CD4-positive, alpha-beta memory T cell (primary cell): ENCODE measurements at regions of chr1 and their contacts with region 1.

Region 1: DNA sequence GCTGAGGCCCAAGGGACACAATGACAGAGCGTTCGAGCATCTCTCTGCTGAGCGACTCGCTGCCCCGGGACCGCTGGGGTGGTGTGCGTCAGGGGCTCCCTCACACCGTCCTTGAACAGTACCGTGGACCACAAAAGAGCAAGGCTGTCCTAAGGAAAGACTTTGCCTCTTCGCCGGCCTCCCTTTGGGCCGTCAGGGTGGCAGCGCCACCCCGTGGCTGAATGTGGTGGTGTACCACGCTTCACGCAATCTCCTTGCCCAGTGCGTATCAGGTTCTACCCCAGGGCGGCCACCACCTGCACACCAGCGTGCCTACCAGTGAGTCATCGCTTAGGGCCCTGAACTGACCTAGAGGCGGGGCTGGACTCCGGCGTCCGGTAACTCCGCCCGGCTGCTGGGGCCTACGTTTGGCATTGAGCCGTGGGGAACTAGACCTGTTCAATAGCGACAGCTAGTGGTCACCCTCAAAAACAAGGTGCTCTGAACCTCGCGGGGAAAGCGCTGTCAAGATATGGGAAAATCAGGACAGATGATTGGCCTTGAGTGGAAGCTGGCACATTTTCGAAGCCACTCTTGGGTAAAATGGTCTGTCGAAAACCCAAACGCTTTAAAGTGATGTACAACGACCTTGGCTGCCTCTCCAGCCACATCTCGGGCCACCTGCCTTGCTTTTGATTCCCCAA is 8.1 kb upstream of the TRAF3IP3 start:
- DNase-seq: peak; percentile 80 to 88 (median 83)
- H3K4me3 ChIP-seq: peak overlapping the region; percentile 17 to 67
- H3K4me3 Mint-ChIP-seq: peak overlapping the region; percentile 89 to 96 (median 92)
- H3K27ac ChIP-seq: peak overlapping the region; percentile 64
- H3K27ac Mint-ChIP-seq: peak overlapping the region; percentile 75 to 99 (median 97)
- H3K4me1 ChIP-seq: peaks cover 58% of the 10 kb centered on the region
- H3K4me1 Mint-ChIP-seq: peaks cover 41 to 69% (median 54%) of the 10 kb centered on the region in 4 donors
- H3K27me3 ChIP-seq: no peaks in the 10 kb centered on the region
- H3K27me3 Mint-ChIP-seq: no peaks in the 10 kb centered on the region

Region 2: DNA sequence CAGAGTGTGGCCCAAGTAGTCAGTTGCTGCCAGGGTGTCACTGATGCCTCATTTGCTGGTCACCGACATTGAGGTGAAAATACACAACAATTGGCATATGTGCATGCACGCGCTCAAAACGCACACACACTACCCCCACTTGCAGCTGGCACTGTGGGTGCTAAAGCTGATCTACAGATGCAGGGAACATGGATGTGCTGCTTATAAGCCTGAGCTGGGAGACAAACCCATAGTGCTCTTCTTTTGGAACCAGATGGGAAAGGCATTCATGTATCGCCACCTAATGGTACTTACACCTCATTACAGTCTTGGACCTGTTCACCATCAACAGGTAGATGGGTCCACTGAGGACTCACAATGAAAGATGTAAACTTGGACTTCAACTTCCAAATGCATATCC is 234.5 kb before region 1 on chr1:
- CTCF ChIA-PET with region 1: no interaction called
- POLR2A ChIA-PET with region 1: no interaction called
- intact Hi-C with region 1: no loop called
- DNase-seq: no peak
- H3K4me3 ChIP-seq: no peak overlapping the region
- H3K4me3 Mint-ChIP-seq: no peak overlapping the region
- H3K27ac ChIP-seq: no peak overlapping the region
- H3K27ac Mint-ChIP-seq: no peak overlapping the region
- H3K4me1 ChIP-seq: no peaks in the 10 kb centered on the region
- H3K4me1 Mint-ChIP-seq: peaks cover 0 to 1% (median 0%) of the 10 kb centered on the region in 4 donors
- H3K27me3 ChIP-seq: no peaks in the 10 kb centered on the region
- H3K27me3 Mint-ChIP-seq: peaks cover 10 to 14% of the 10 kb centered on the region in 2 donors

Region 3: GRCh38 chr1:209576798-209577197 is 170.9 kb before region 1 on chr1:
- CTCF ChIA-PET with region 1: interaction called, 25 read pairs
- POLR2A ChIA-PET with region 1: no interaction called
- intact Hi-C with region 1: loop called (anchors 1 kb)
- DNase-seq: peak in 4 of 5 donors; percentile 47 to 60 (median 50)
- H3K4me3 ChIP-seq: no peak overlapping the region
- H3K4me3 Mint-ChIP-seq: no peak overlapping the region
- H3K27ac ChIP-seq: no peak overlapping the region
- H3K27ac Mint-ChIP-seq: peak overlapping the region in 3 of 7 donors; percentile 24 to 61 (median 53)
- H3K4me1 ChIP-seq: no peaks in the 10 kb centered on the region
- H3K4me1 Mint-ChIP-seq: peaks cover 0 to 2% (median under 1%) of the 10 kb centered on the region in 4 donors
- H3K27me3 ChIP-seq: peaks cover 5% of the 10 kb centered on the region
- H3K27me3 Mint-ChIP-seq: peaks cover 2 to 6% of the 10 kb centered on the region in 2 donors

Region 4: DNA sequence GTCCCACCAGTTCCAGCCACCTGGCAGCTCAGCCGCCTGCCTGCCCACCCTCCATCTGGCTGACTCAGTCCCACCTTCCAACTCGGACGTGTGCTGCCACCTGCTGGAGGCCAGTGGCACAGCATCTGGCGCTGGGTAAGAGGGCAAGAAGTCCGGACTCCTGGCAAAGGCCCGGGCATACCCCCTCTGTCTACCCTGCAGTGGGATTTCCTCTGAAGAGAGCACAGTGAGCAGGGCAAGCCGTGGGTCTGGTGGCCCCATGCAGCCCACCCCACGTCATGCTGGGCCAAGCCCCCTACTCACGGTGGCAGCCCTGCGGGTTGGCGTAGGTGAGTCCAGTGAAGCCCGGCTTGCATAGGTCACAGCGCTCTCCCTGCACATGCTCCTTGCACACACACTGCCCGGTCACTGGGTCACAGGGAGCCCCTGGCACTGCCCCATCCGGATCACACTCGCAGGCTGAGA is 120.0 kb before region 1 on chr1:
- CTCF ChIA-PET with region 1: interaction called, 6 read pairs
- POLR2A ChIA-PET with region 1: no interaction called
- intact Hi-C with region 1: loop called (anchors 1 kb)
- DNase-seq: peak; percentile 50 to 65 (median 61)
- H3K4me3 ChIP-seq: no peak overlapping the region
- H3K4me3 Mint-ChIP-seq: peak overlapping the region in 1 of 8 donors; percentile 23
- H3K27ac ChIP-seq: no peak overlapping the region
- H3K27ac Mint-ChIP-seq: no peak overlapping the region
- H3K4me1 ChIP-seq: peaks cover 4% of the 10 kb centered on the region
- H3K4me1 Mint-ChIP-seq: peaks cover 2 to 18% (median 6%) of the 10 kb centered on the region in 4 donors
- H3K27me3 ChIP-seq: no peaks in the 10 kb centered on the region
- H3K27me3 Mint-ChIP-seq: no peaks in the 10 kb centered on the region

Region 5: DNA sequence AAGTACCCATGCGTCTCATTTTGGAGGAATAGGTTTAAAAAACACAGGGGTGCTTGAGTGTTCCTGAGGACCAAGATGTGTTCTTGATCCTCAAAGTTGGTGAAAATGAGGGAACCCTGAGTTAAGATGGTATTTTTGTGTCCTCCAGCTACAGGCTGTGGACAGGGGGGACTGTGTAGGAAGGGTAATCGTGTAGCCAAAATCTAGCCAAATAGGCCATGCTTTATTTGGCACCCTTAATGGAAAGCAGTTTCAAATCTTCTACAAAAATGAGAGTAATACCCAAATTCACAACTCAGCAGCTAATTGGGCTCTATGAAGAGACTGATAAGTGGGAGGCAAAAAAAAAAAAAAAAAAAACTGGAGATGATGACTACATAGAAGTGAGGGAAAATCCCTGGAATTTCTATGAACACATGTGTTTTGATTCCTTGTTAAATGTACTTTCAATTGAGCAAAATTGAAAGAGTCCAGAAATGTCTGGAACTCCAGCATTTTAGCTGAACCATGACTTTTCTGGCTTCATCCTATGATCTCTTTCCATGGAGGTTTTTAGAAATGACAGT is 42.6 kb before region 1 on chr1:
- CTCF ChIA-PET with region 1: interaction called, 4 read pairs
- POLR2A ChIA-PET with region 1: no interaction called
- intact Hi-C with region 1: loop called (anchors 5 kb)
- DNase-seq: no peak
- H3K4me3 ChIP-seq: no peak overlapping the region
- H3K4me3 Mint-ChIP-seq: no peak overlapping the region
- H3K27ac ChIP-seq: no peak overlapping the region
- H3K27ac Mint-ChIP-seq: no peak overlapping the region
- H3K4me1 ChIP-seq: peaks cover 4% of the 10 kb centered on the region
- H3K4me1 Mint-ChIP-seq: peaks cover 10 to 16% (median 12%) of the 10 kb centered on the region in 4 donors
- H3K27me3 ChIP-seq: no peaks in the 10 kb centered on the region
- H3K27me3 Mint-ChIP-seq: peaks cover 0 to 3% of the 10 kb centered on the region in 2 donors

Region 6: DNA sequence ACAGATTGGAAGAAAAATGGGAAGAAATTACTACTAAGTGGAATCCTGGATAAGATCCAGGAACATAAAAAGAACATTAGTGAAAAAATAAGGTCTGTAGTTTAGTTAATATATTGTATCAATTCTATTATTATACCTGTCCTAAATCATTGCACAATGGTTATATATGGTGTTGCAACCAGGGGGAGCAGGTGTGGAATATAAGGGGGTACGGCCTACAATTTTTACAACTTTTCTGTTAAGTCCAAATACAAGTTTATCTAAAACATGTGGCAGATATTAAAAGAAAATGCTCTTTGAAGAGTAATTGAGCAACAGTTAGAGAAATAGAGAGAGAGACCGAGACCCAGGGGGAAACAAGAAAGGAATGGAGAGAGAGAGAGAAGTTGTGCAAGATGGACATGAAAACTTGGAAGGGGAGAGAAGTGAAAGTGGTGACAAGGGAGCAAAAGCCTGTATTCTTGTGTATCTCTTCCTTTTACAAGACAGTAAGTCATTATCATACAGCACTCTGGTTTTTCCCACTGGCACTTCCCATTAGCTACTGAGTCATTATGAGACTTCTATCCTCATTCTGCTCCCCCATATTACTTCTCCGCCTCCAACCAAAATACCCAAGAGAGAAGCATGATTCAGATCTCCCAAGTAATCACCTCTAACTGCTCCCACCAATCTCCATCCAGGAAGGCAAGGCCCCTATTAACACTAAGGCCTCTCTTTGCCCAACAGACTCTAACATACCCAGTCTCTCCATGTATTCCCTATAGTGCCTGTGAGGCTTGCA is 14.1 kb before region 1 on chr1:
- CTCF ChIA-PET with region 1: interaction called, 13 read pairs
- POLR2A ChIA-PET with region 1: no interaction called
- intact Hi-C with region 1: no loop called
- DNase-seq: no peak
- H3K4me3 ChIP-seq: no peak overlapping the region
- H3K4me3 Mint-ChIP-seq: no peak overlapping the region
- H3K27ac ChIP-seq: no peak overlapping the region
- H3K27ac Mint-ChIP-seq: peak overlapping the region in 1 of 7 donors; percentile 23
- H3K4me1 ChIP-seq: no peaks in the 10 kb centered on the region
- H3K4me1 Mint-ChIP-seq: peaks cover 0 to 3% (median 0%) of the 10 kb centered on the region in 4 donors
- H3K27me3 ChIP-seq: no peaks in the 10 kb centered on the region
- H3K27me3 Mint-ChIP-seq: peaks cover 0 to 2% of the 10 kb centered on the region in 2 donors

Region 7: DNA sequence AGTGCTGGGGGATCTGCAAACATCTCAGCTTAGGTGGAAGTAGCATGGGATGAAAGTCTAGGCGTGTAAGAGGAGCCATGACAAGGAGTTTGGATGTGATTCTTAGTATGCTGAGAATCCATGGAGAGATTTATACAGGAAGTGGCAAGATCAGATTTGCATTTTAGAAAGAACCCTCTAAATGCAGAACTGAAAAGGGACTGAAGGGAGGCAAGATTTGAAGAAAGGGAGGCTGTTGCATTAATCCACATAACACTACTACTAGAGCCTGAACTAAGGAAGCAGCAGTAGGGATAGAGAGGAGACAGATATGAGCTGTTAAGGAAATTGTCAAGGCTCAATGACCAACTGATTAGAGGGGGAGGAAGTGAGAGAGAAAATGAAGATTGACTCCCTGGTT is 26.9 kb after region 1 on chr1:
- CTCF ChIA-PET with region 1: interaction called, 385 read pairs
- POLR2A ChIA-PET with region 1: interaction called, 1,778 read pairs
- intact Hi-C with region 1: no loop called
- DNase-seq: no peak
- H3K4me3 ChIP-seq: no peak overlapping the region
- H3K4me3 Mint-ChIP-seq: peak overlapping the region in 2 of 8 donors; percentile 7 to 61
- H3K27ac ChIP-seq: no peak overlapping the region
- H3K27ac Mint-ChIP-seq: peak overlapping the region in 5 of 7 donors; percentile 43 to 88 (median 72)
- H3K4me1 ChIP-seq: peaks cover 71% of the 10 kb centered on the region
- H3K4me1 Mint-ChIP-seq: peaks cover 18 to 28% (median 19%) of the 10 kb centered on the region in 4 donors
- H3K27me3 ChIP-seq: no peaks in the 10 kb centered on the region
- H3K27me3 Mint-ChIP-seq: no peaks in the 10 kb centered on the region

Region 8: GRCh38 chr1:209827384-209828262 is 79.9 kb after region 1 on chr1 and contains the start of gene UTP25:
- CTCF ChIA-PET with region 1: interaction called, 24 read pairs
- POLR2A ChIA-PET with region 1: interaction called, 9 read pairs
- intact Hi-C with region 1: no loop called
- DNase-seq: peak; percentile 91 to 94 (median 93)
- H3K4me3 ChIP-seq: peak within 1 kb of the TSS; percentile 90 to 94
- H3K4me3 Mint-ChIP-seq: peak within 1 kb of the TSS; percentile 88 to 98 (median 96)
- H3K27ac ChIP-seq: peak within 1 kb of the TSS; percentile 73
- H3K27ac Mint-ChIP-seq: peak within 1 kb of the TSS; percentile 90 to 97 (median 92)
- H3K4me1 ChIP-seq: peaks cover 18% of the 10 kb centered on the region
- H3K4me1 Mint-ChIP-seq: peaks cover 24 to 46% (median 32%) of the 10 kb centered on the region in 4 donors
- H3K27me3 ChIP-seq: no peaks in the 10 kb centered on the region
- H3K27me3 Mint-ChIP-seq: peaks cover 5% of the 10 kb centered on the region in 2 donors
- total RNA-seq, gene UTP25: 13.4 to 13.6 TPM